ENCODE measurements at regions of chr1 and their contacts with region 1.

Region 1: DNA sequence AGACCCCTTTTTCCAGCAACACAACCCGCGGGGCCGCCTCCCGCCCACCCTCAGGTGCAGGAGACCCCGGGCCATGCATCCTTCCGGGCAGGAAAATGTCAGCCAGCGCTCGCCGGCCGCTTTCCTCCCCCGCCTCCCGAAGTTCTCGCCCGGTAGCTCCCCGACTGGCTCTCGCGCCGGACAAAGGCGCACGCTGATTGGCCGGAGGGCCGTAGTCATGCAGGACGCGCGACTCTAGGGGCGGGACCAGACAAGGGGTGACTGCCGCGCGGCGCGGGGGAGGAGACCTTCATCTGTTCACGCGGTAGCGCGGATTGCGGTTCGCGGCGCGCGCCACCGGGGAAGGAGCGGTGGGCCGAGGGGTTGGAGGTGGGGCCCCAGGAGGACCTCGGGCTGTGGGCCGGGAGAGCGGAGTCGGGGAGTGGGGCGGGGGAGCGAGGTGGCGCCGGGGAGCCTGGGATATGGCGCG is at the start of gene FLVCR1:
- DNase-seq: peak; percentile 98
- ATAC-seq: peak; percentile 92
- H3K4me3 ChIP-seq: peak within 1 kb of the TSS; percentile 92
- H3K27ac ChIP-seq: peak within 1 kb of the TSS; percentile 37
- H3K4me1 ChIP-seq: peaks cover 31% of the 10 kb centered on the region
- H3K27me3 ChIP-seq: no peaks in the 10 kb centered on the region
- CTCF ChIP-seq: no peak
- total RNA-seq, gene FLVCR1: 13.9 and 15.4 TPM in 2 replicates

Region 2: GRCh38 chr1:212482384-212483281 is 375.4 kb before region 1 on chr1:
- CTCF ChIA-PET with region 1: no interaction called
- POLR2A ChIA-PET with region 1: interaction called, 11 read pairs
- intact Hi-C with region 1: no loop called
- DNase-seq: peak; percentile 95
- ATAC-seq: peak; percentile 5
- H3K4me3 ChIP-seq: no peak overlapping the region
- H3K27ac ChIP-seq: peak overlapping the region; percentile 92
- H3K4me1 ChIP-seq: peaks cover 62% of the 10 kb centered on the region
- H3K27me3 ChIP-seq: no peaks in the 10 kb centered on the region
- CTCF ChIP-seq: no peak

Region 3: GRCh38 chr1:212791676-212792395 is 66.2 kb before region 1 on chr1 and contains the starts of genes NSL1 and TATDN3:
- CTCF ChIA-PET with region 1: no interaction called
- POLR2A ChIA-PET with region 1: interaction called, 8 read pairs
- intact Hi-C with region 1: loop called (anchors 1 kb)
- DNase-seq: peak; percentile 99
- ATAC-seq: peak; percentile 92
- H3K4me3 ChIP-seq: peak within 1 kb of the TSS; percentile 87
- H3K27ac ChIP-seq: peak within 1 kb of the TSS; percentile 62
- H3K4me1 ChIP-seq: peaks cover 5% of the 10 kb centered on the region; the same call in 1 of the 2 replicates
- H3K27me3 ChIP-seq: no peaks in the 10 kb centered on the region
- CTCF ChIP-seq: no peak
- total RNA-seq, gene NSL1: 37.3 and 56.1 TPM in 2 replicates
- total RNA-seq, gene TATDN3: 8.8 and 12.7 TPM in 2 replicates

Region 4: DNA sequence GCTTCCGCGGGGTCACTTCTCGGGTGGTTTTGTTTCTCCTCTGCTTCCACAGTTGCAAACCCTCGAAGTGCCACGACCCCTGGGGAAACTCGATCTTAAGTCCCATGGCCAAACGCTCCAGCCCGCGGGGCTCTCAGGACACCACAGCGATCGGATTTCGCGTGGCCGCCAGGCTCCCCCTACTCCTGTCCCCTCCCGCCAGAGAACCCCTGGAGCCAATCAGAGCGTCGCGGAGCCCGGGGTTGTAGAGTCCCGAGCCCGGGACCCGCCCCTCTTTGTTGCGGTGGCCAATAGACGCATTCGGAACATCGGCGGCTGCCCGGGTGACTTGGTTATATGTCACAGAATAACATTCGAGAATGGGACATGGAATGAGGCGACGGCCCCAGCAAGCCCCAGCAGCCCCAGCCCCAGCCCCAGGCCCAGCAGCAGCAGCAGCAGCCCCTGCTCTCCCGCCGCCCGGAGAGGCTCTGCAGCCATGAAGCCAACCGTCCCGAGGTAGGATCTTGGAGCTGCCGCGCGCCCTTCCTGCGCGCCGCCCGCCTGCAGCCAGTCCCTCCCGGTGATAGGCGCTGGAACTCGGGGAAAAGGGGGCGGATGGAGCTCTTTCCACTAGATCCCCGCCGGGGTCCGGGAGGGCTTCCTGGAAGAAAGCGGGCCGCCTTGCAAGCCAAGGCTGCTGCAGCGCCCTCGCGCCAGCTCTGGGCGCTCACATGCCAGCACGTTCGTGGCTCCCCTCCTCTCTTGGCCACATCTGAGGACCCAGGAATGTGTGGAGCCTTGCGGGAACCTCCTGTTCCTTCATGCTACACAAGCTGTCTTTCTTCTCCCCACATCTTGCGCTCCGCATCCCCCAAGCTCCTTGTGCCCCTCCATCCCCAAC is 92.5 kb after region 1 on chr1 and contains the start of gene VASH2:
- CTCF ChIA-PET with region 1: no interaction called
- POLR2A ChIA-PET with region 1: no interaction called
- intact Hi-C with region 1: loop called (anchors 5 kb)
- DNase-seq: peak; percentile 91
- ATAC-seq: peak; percentile 97
- H3K4me3 ChIP-seq: peak within 1 kb of the TSS; percentile 71
- H3K27ac ChIP-seq: no peak within 1 kb of the TSS
- H3K4me1 ChIP-seq: peaks cover 13% of the 10 kb centered on the region
- H3K27me3 ChIP-seq: no peaks in the 10 kb centered on the region
- CTCF ChIP-seq: 0 out of 2 replicates have a peak, but pooled peaks have one; percentile 22
- total RNA-seq, gene VASH2: 4.7 TPM in 2 replicates

Region 5: DNA sequence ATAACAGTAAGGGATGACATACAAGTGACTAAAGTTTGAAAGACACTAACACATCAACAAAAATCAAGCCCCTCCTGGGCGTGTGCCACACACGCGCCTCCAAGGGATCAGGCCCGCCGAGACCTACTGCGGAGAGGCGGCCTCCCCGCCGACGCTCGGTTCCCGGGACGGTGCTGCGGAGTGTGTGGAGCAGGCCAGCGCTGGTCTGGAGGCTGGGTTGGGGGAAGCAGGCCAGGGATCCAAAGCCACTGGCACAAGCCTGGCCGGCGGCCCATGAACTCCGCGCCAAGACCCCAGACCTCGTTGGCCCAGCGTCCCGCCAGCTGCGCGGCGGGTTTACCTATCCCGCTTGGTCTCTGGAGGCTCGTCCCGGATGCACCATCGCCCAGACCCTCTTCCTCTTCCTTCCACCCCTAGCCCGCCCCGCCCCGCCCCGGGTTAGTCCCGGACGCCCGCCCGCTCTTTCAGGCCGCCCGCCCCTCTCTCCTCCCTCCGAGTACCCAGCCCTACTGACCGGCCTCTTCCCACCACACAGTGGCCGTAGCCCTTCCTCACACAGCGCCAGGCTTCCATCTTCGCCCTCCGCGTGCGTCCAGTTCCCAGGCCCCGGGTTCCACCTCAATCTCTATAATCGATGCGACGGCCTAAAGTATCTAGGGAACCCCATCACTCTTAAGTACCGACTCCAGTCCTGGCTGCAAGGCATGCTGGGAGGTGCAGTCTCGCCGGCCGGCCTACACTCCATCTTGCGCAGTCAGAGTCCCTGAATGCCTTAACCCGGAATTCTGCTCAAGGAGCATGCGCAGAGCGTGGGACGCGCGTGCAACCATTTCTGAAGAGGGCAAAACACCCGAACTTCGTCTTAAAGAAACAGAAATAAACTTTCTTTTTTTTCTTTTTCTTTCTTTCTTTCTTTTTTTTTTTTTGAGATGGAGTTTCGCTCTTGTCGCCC is 157.3 kb after region 1 on chr1 and contains the start of gene ANGEL2:
- CTCF ChIA-PET with region 1: no interaction called
- POLR2A ChIA-PET with region 1: no interaction called
- intact Hi-C with region 1: loop called (anchors 5 kb)
- DNase-seq: peak; percentile 99
- ATAC-seq: peak; percentile 87
- H3K4me3 ChIP-seq: peak within 1 kb of the TSS; percentile 89
- H3K27ac ChIP-seq: peak within 1 kb of the TSS; percentile 69
- H3K4me1 ChIP-seq: peaks cover 43% of the 10 kb centered on the region
- H3K27me3 ChIP-seq: no peaks in the 10 kb centered on the region
- CTCF ChIP-seq: no peak
- total RNA-seq, gene ANGEL2: 27.0 and 36.8 TPM in 2 replicates

Measured in PC-3 (cell line).